ENCODE measurements at regions of chr7 and their contacts with region 1.

Region 1: DNA sequence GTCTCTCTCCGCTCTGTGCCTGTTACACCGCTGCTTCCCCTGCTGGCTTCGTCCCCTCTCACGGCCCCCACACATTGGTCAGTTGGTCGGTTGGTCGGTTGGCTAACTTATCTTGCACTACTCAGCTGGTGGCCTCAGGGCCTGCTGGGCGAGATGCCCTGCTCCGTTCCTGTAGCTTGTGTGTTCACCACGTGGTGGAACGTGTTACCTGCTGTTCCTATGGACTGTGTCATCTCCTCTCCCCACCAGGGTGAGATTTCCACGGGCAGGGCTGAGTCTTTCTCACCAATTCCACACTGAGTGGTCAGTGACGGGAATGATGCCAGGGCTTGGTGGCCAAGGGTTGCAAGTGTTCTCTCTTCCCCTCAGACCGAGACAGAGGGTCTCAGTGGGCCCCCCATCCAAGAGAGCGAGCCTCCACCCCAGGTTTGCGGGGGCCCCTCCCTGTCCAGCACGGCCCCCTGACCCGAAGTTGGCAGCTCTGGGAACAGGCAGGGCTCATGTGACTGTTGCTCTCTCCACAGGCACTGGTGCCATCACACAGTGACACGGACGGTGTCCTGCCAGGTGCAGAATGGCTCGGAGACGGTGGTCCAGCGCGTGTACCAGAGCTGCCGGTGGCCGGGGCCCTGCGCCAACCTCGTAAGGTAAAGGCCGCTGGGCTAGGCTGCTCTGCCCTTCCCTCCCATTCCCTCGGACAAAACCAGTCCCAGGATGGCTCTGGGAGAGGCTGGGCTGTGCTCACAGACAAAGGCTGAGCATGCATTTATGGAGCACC is 57.0 kb downstream of the COL26A1 start:
- DNase-seq: no peak
- ATAC-seq: no peak
- H3K4me3 ChIP-seq: no peak overlapping the region
- H3K27ac ChIP-seq: no peak overlapping the region
- H3K4me1 ChIP-seq: no peaks in the 10 kb centered on the region
- H3K27me3 ChIP-seq: peaks cover 0 to 59% (median 11%) of the 10 kb centered on the region in 7 donors
- CTCF ChIP-seq: no peak

Region 2: DNA sequence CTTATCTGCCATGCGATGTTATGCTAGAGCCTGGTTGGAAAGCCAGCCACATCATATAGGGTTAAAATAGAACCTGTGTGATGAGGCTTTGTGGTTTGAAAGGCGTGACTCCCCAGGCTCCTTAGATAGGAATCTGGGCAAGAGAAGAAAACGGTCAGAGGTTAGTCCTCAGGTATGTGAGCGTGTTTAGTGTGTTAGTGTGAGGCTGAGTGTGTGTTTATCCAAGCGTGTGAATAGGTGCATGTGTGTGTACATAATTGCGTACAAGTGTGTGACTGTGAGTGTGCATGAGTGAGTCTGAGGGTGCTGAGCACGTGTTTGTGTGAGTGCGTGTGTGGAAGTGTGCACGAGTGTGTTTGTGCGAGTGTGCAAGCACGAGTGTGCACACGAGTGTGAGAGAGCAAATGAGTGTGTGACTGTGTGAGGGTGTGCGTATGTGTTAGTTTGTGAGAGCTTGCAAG is 22.9 kb after region 1 on chr7:
- intact Hi-C with region 1: loop called in 1 of 10 experiments (anchors 1 kb)
- DNase-seq: no peak
- ATAC-seq: no peak
- H3K4me3 ChIP-seq: no peak overlapping the region
- H3K27ac ChIP-seq: no peak overlapping the region
- H3K4me1 ChIP-seq: no peaks in the 10 kb centered on the region
- H3K27me3 ChIP-seq: peaks cover 0 to 62% (median 4%) of the 10 kb centered on the region in 7 donors
- CTCF ChIP-seq: no peak